ENCODE measurements at regions of chr1 and their contacts with region 1.

Region 1: DNA sequence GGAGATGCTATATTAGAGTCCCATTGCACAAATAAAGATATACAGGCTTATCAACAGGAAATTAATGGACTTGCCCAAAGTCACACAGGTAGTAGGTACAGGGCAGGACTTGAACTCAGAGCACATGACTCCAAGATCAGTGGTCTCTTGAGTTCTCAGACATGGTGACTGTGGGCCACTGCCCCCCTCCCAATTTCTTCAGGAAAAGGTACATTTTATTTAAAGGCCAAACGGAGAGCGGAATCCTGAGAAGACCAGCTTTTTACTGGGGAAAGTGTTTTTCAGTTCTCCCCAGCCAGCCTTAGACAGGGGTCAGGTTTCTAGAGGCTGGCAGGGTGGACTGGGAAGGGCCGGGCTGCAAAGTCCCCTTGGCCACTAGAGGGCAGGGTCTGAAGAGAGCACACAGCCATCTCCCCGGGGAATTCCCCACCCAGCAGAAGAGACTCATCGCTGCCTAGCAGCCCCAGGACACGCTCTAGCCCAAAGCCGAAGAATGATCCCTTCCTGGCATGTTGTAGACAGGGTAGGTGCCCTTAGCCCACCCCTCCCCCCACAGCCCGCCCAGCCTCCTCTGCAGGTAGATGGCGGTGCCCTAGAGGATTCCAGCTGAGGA is 29.7 kb downstream of the ACP6 start:
- DNase-seq: peak; percentile 65
- H3K4me3 ChIP-seq: no peak overlapping the region
- H3K27ac ChIP-seq: no peak overlapping the region
- H3K27me3 ChIP-seq: no peaks in the 10 kb centered on the region
- CTCF ChIP-seq: peak; percentile 94

Region 2: GRCh38 chr1:147504801-147505311 is 135.8 kb before region 1 on chr1:
- CTCF ChIA-PET with region 1: interaction called, 13 read pairs
- POLR2A ChIA-PET with region 1: no interaction called
- DNase-seq: peak; percentile 4
- H3K4me3 ChIP-seq: peak overlapping the region; percentile 20; the same call in 1 of the 2 replicates
- H3K27ac ChIP-seq: no peak overlapping the region
- H3K27me3 ChIP-seq: peaks cover 7% of the 10 kb centered on the region
- CTCF ChIP-seq: no peak

Region 3: DNA sequence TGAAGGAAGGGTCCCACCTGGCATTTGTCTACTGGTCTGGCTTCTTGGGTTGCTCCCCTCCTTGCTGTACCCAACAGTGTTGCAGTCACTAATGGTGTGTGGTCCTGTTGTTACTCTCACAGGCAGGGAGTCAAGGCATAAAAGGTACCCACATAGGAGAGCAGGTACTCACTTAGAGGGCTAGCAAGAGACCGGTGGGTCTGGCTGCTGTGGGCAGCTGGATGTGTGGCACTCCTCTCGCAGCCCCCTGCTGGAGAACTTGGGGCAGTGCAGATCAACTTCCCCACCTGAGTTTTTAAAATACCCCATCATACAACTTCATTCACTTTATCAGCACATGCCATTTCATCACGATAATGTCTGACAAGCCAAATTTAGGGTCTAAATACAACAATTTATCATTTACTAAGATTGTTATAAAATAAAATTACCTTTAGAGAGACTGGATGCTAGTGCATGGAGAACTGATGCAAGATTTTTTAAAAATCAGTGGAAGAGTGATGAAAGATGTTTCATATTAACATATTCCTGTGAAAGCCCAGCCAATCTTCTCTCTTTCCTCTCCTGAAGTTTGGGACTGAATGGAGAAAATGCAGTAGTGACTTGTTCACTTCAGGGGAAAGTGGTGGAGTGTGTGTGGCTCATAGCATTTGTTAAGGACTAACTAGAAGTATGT is 13.1 kb before region 1 on chr1:
- CTCF ChIA-PET with region 1: interaction called, 42 read pairs
- POLR2A ChIA-PET with region 1: no interaction called
- DNase-seq: peak; percentile 26
- H3K4me3 ChIP-seq: no peak overlapping the region
- H3K27ac ChIP-seq: no peak overlapping the region
- H3K27me3 ChIP-seq: no peaks in the 10 kb centered on the region
- CTCF ChIP-seq: peak; percentile 96

Region 4: GRCh38 chr1:147670317-147671041 is 29.8 kb after region 1 on chr1 and contains the start of gene ACP6:
- CTCF ChIA-PET with region 1: interaction called, 23 read pairs
- POLR2A ChIA-PET with region 1: no interaction called
- DNase-seq: peak; percentile 85
- H3K4me3 ChIP-seq: peak within 1 kb of the TSS; percentile 78
- H3K27ac ChIP-seq: peak within 1 kb of the TSS; percentile 57
- H3K27me3 ChIP-seq: no peaks in the 10 kb centered on the region
- CTCF ChIP-seq: no peak
- polyA plus RNA-seq, gene ACP6: 8.6 and 9.9 TPM in 2 replicates

Region 5: DNA sequence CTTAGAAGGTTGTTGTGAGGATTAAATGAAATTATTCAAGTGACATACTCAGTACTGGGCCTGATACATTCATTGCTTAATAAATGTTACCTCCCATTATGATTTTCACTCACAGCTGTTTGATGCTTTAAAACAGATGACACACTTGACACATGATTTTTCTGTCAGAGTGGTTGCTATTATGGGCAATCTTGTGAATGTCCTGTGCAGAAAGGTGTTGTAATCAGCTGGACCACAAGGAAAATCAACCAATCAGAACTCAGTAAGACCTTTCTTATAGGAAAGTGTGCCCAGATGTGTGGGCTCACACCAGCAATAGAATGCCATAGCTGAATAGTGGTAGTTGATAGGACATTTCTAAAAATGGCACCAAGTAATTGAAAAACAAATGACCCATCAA is 96.2 kb after region 1 on chr1:
- CTCF ChIA-PET with region 1: no interaction called
- POLR2A ChIA-PET with region 1: no interaction called
- DNase-seq: no peak
- H3K4me3 ChIP-seq: no peak overlapping the region
- H3K27ac ChIP-seq: no peak overlapping the region
- H3K27me3 ChIP-seq: peaks cover 2% of the 10 kb centered on the region
- CTCF ChIP-seq: no peak

Region 6: GRCh38 chr1:147781056-147781471 is 140.4 kb after region 1 on chr1:
- CTCF ChIA-PET with region 1: no interaction called
- POLR2A ChIA-PET with region 1: no interaction called
- DNase-seq: no peak
- H3K4me3 ChIP-seq: no peak overlapping the region
- H3K27ac ChIP-seq: no peak overlapping the region
- H3K27me3 ChIP-seq: no peaks in the 10 kb centered on the region
- CTCF ChIP-seq: no peak

Region 7: DNA sequence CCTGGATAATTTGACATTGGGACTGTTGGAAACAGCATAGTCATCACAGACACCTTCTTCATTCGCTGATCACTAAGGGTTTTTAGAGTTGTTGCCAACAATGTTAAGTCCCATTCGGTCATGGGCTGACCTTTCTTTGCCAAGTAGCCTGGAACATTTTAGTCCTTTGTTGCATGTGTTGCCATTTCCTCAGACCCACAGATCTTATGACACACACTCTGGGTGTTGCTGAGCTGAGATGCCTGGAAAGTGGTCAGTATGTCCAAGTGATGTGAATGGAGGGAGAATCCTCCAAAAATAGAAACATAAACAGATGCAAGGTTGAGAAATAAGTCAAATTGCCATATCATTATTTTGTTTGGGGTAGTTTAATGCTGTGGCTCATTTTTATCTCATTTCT is 181.2 kb after region 1 on chr1:
- CTCF ChIA-PET with region 1: no interaction called
- POLR2A ChIA-PET with region 1: no interaction called
- DNase-seq: no peak
- H3K4me3 ChIP-seq: no peak overlapping the region
- H3K27ac ChIP-seq: no peak overlapping the region
- H3K27me3 ChIP-seq: no peaks in the 10 kb centered on the region
- CTCF ChIP-seq: no peak

Measured in AG04450 (cell line).